A549 (cell line): ENCODE measurements at regions of chr20 and their contacts with region 1.

Region 1: DNA sequence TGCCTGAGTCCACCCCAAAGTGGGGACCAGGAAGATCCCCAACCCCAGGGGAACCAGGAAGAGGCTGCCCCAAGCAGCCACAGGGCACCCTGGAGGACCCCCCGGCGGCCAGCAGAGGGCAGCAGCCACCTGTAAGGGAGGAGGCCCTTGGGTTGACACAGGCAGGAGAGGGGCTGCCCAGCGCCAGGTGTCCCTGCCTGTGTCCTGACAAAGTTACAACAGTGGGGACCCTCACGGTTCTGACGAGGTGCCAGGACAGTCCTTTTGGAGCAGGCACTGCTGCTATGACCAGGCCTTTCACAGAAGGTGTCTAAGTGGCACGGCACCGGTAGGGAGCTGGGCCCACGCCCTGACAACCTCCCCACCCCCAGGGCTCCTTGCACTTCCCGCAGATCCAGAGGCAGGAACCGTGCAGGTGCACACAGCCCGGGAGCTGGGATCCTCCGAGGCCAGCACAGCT is 176.7 kb downstream of the BMP7 start:
- DNase-seq: peak; percentile 61 to 71
- ATAC-seq: peak; percentile 82 to 95
- H3K4me3 ChIP-seq: no peak overlapping the region
- H3K27ac ChIP-seq: no peak overlapping the region
- H3K4me1 ChIP-seq: no peaks in the 10 kb centered on the region
- CTCF ChIP-seq: peak; percentile 92
- EP300 ChIP-seq: no peak
- POLR2A ChIP-seq: no peak
- RAD21 ChIP-seq: peak; percentile 91 to 92

Region 2: GRCh38 chr20:56468316-56469082 is 621.2 kb before region 1 on chr20 and contains the start of gene RTF2:
- CTCF ChIA-PET with region 1: no interaction called
- POLR2A ChIA-PET with region 1: no interaction called
- DNase-seq: peak; percentile 74 to 94
- ATAC-seq: peak; percentile 99 to 100
- H3K4me3 ChIP-seq: peak within 1 kb of the TSS; percentile 62
- H3K27ac ChIP-seq: peak within 1 kb of the TSS; percentile 78 to 92
- H3K4me1 ChIP-seq: peaks cover 12% of the 10 kb centered on the region; the same call in 2 of the 3 replicates
- CTCF ChIP-seq: no peak
- EP300 ChIP-seq: no peak
- POLR2A ChIP-seq: peak; percentile 57
- RAD21 ChIP-seq: no peak
- polyA plus RNA-seq, gene RTF2: 86.6 and 102 TPM in 2 replicates

Region 3: DNA sequence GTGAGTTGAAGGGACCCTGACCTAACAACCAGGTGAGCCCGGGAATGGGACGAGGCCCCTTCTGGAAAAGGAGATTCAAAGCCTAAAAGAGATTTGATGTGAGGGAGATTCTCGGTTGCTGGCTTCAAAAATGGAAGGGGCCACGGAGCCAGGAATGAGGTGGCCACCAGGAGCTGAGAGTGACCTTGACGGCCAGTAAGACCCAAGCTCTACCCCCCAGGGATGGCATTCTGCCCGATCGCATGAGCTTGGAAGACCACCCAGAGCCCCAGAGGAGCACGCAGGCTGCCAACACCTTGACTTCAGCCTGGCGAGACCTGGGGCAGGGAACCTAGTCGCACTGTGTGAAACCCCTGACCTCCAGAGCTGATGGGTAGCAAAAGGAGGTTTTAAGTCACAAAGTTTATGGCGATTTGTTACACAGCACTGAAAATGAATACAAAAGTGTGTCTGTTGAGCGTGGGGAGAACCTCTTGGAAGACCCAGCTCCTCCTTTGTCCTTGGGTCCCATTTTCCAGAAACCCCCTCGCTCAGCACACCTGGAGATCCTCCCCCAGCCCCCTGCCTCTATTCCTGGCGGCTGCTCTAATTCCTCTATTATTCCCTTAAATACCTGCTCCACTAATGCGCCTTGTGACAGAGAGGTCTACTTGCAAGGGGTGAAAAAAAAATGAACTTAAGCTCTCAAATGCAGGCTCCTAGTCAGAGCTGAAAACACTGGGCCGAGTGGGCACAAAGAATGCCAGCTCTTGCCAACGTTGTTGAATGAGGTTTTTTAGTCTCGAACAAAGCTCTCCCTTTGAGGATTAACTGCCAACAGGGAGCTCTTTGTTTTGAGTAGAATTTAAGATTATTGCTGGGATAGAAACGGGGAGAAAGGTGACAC is 13.1 kb after region 1 on chr20:
- CTCF ChIA-PET with region 1: interaction called, 20 read pairs
- POLR2A ChIA-PET with region 1: no interaction called
- DNase-seq: no peak
- ATAC-seq: no peak
- H3K4me3 ChIP-seq: no peak overlapping the region
- H3K27ac ChIP-seq: no peak overlapping the region
- H3K4me1 ChIP-seq: no peaks in the 10 kb centered on the region
- CTCF ChIP-seq: no peak
- EP300 ChIP-seq: no peak
- POLR2A ChIP-seq: no peak
- RAD21 ChIP-seq: no peak

Region 4: GRCh38 chr20:57272883-57273535 is 183.3 kb after region 1 on chr20:
- CTCF ChIA-PET with region 1: interaction called, 12 read pairs
- POLR2A ChIA-PET with region 1: no interaction called
- DNase-seq: no peak
- ATAC-seq: peak; percentile 57 to 69; a peak in 4 of 6 replicates
- H3K4me3 ChIP-seq: no peak overlapping the region
- H3K27ac ChIP-seq: no peak overlapping the region
- H3K4me1 ChIP-seq: no peaks in the 10 kb centered on the region
- CTCF ChIP-seq: no peak
- EP300 ChIP-seq: no peak
- POLR2A ChIP-seq: no peak
- RAD21 ChIP-seq: no peak

Region 5: DNA sequence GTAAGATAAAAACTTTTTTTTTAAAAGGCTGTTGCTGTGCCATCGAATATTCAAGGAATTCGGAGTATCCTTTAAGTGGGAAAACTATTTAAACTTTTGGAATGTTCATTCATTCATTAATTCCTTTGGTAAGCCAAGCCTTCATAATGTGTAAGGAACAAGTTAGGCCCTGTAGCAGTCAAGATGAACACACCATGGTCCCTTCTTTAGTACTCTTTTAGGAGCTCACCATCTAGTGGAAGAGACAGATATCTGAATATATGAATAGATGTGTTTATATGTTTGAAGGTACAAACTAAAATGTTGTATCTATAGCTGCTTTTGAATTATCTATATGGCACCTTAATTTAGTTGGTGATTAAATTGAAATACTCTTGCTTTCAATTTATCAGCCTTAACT is 245.7 kb after region 1 on chr20:
- CTCF ChIA-PET with region 1: interaction called, 51 read pairs
- POLR2A ChIA-PET with region 1: no interaction called
- DNase-seq: peak in 1 of 2 experiments; percentile 27
- ATAC-seq: peak; percentile 54 to 85; a peak in 4 of 6 replicates
- H3K4me3 ChIP-seq: no peak overlapping the region
- H3K27ac ChIP-seq: no peak overlapping the region
- H3K4me1 ChIP-seq: no peaks in the 10 kb centered on the region
- CTCF ChIP-seq: 0 out of 3 replicates have a peak, but pooled peaks have one; percentile 16
- EP300 ChIP-seq: no peak
- POLR2A ChIP-seq: no peak
- RAD21 ChIP-seq: peak in 1 of 2 experiments; percentile 27; a peak in 2 of 5 replicates

Region 6: DNA sequence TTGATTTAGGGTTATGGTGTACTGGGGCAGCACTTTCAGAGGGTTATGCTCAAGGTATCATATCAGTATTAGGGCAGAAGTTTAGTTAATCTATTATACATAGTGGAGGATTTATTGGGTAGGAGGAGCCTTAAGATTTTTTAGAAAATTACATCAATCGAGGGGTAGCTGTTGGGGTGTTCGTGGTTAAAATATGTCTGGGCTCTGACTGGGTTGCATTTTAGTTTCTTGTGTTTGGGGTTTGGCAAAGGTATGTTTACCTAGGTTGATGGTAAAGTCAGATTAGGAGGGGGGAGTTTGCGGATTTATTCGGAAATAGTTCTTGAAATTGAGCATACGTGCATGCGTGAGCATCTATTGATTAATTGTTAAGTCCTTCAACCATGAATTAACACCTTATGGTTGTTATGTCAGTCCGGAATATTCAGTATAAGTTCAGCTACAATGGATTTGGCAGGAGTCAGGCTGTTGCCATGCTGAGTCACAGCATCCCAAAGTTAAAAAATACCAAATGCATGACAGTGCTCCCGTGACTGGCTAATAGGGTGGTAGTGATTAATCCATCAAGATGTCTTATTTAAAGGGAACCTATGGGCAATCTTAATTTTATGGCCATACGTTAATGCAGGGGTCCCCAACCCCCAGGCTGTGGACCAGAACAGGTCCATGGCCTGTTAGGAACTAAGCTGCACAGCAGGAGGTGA is 271.6 kb after region 1 on chr20:
- CTCF ChIA-PET with region 1: interaction called, 12 read pairs
- POLR2A ChIA-PET with region 1: no interaction called
- DNase-seq: no peak
- ATAC-seq: peak in 1 of 2 experiments; percentile 43; a peak in 1 of 6 replicates
- H3K4me3 ChIP-seq: no peak overlapping the region
- H3K27ac ChIP-seq: no peak overlapping the region
- H3K4me1 ChIP-seq: no peaks in the 10 kb centered on the region; the same call in 1 of the 3 replicates
- CTCF ChIP-seq: no peak
- EP300 ChIP-seq: no peak
- POLR2A ChIP-seq: no peak
- RAD21 ChIP-seq: no peak